B cell (primary cell): ENCODE measurements at regions of chr22 and their contacts with region 1.

Region 1: DNA sequence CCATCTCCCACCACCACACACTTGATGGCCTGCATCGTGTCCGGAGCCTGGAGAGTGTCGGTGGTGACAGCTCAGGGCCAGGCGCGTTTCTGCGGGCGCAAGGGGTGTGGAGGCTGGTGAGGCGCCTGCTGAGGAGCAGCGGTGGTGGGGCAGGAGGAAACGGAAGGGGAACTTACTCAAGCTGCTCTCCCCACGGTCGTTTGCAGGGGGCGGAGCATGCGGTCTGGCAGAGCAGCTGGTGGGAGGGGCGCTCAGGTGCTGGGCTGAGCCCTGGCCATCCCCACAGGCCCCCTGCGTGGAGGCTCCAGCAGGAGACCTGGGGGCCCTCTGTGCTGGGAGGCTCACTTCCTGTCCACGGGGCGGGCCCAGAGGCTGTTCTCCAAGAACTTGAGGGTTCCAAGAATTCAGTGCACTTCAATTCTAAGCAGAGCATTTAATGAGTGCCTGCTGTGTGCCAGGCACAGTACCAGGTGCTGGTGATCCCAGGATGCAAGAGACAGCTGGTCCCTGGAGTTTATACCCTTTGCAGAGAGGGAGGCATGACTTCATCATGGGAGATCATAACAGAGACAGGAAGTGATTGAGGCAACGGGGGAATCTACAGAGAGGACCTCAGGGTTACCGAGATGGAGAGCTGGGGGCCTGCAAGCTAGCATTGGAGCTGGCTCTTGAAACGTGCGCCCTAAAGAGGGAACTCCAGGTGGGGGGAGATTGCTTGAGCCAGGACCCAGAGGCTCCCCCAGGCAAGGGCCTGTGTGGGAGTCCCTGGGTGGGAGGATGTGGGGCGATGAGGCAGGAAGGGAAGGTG is at the start of gene RAC2:
- DNase-seq: peak; percentile 94
- ATAC-seq: peak; percentile 65
- H3K4me3 ChIP-seq: peak within 1 kb of the TSS; percentile 88 to 99 (median 97)
- H3K4me3 Mint-ChIP-seq: peak within 1 kb of the TSS; percentile 97
- H3K27ac ChIP-seq: peak within 1 kb of the TSS; percentile 80 to 86
- H3K27ac Mint-ChIP-seq: peak within 1 kb of the TSS; percentile 89
- H3K4me1 ChIP-seq: peaks cover 50 to 68% of the 10 kb centered on the region in 2 donors
- H3K4me1 Mint-ChIP-seq: peaks cover 77% of the 10 kb centered on the region
- H3K27me3 ChIP-seq: no peaks in the 10 kb centered on the region
- H3K27me3 Mint-ChIP-seq: no peaks in the 10 kb centered on the region
- CTCF ChIP-seq: no peak
- total RNA-seq, gene RAC2: 249 and 273 TPM in 2 replicates

Region 2: GRCh38 chr22:37121887-37122591 is 122.3 kb before region 1 on chr22:
- CTCF ChIA-PET with region 1: no interaction called
- POLR2A ChIA-PET with region 1: no interaction called
- intact Hi-C with region 1: loop called (anchors 1 kb)
- DNase-seq: peak; percentile 88
- ATAC-seq: peak; percentile 92
- H3K4me3 ChIP-seq: peak overlapping the region in 1 of 5 experiments; percentile 33
- H3K4me3 Mint-ChIP-seq: peak overlapping the region; percentile 86
- H3K27ac ChIP-seq: peak overlapping the region; percentile 39 to 69
- H3K27ac Mint-ChIP-seq: peak overlapping the region; percentile 98
- H3K4me1 ChIP-seq: peaks cover 14 to 24% of the 10 kb centered on the region in 2 donors
- H3K4me1 Mint-ChIP-seq: peaks cover 29% of the 10 kb centered on the region
- H3K27me3 ChIP-seq: no peaks in the 10 kb centered on the region
- H3K27me3 Mint-ChIP-seq: no peaks in the 10 kb centered on the region
- CTCF ChIP-seq: peak; percentile 19

Region 3: DNA sequence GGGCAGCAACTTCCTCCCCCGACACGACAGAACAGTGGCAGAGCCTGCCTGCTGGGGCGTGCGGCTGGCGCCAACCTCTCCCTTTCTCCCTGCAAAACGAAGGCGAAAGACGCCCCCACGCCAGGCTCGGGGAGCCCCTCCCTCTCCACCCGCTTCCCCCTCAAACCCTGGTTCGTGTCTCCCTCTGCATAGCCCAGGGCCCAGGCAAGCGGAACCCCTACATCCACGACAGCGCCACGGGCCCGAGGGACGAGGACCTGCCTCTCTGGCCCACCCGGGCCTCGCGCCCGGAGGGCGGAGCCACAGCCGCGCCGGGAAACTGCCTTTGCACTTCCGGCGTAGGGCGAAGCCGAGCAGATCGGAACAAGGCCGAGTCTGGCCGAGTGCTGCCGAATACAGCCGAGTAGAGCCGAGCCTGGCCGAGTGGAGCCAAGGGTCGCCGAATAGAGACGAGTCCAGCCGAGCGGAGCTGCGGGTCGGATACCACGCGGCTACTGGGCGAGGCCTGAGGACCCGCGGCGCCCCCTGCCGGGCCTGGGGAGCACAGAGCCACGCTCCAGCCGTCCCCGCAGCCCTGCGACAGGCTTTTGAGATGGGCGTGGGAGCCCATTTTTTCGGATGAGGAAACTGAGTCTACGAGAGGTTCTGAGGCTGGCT is 45.1 kb before region 1 on chr22:
- CTCF ChIA-PET with region 1: interaction called, 108 read pairs
- POLR2A ChIA-PET with region 1: interaction called, 45 read pairs
- intact Hi-C with region 1: loop called (anchors 1 kb)
- DNase-seq: peak; percentile 99
- ATAC-seq: peak; percentile 96
- H3K4me3 ChIP-seq: peak overlapping the region; percentile 59 to 89 (median 80)
- H3K4me3 Mint-ChIP-seq: peak overlapping the region; percentile 93
- H3K27ac ChIP-seq: peak overlapping the region; percentile 85 to 90
- H3K27ac Mint-ChIP-seq: peak overlapping the region; percentile 97
- H3K4me1 ChIP-seq: peaks cover 21 to 28% of the 10 kb centered on the region in 2 donors
- H3K4me1 Mint-ChIP-seq: peaks cover 26% of the 10 kb centered on the region
- H3K27me3 ChIP-seq: no peaks in the 10 kb centered on the region
- H3K27me3 Mint-ChIP-seq: no peaks in the 10 kb centered on the region
- CTCF ChIP-seq: peak; percentile 97

Region 4: GRCh38 chr22:37223965-37224551 is 20.3 kb before region 1 on chr22:
- CTCF ChIA-PET with region 1: interaction called, 129 read pairs
- POLR2A ChIA-PET with region 1: interaction called, 83 read pairs
- intact Hi-C with region 1: loop called (anchors 1 kb)
- DNase-seq: peak; percentile 79
- ATAC-seq: peak; percentile 61
- H3K4me3 ChIP-seq: peak overlapping the region in 2 of 5 experiments; percentile 5 to 8
- H3K4me3 Mint-ChIP-seq: peak overlapping the region; percentile 71
- H3K27ac ChIP-seq: peak overlapping the region; percentile 87 to 93
- H3K27ac Mint-ChIP-seq: peak overlapping the region; percentile 98
- H3K4me1 ChIP-seq: peaks cover 91 to 96% of the 10 kb centered on the region in 2 donors
- H3K4me1 Mint-ChIP-seq: peaks cover 86% of the 10 kb centered on the region
- H3K27me3 ChIP-seq: no peaks in the 10 kb centered on the region
- H3K27me3 Mint-ChIP-seq: no peaks in the 10 kb centered on the region
- CTCF ChIP-seq: no peak

Region 5: GRCh38 chr22:37260901-37261336 is 16.6 kb after region 1 on chr22:
- CTCF ChIA-PET with region 1: interaction called, 377 read pairs
- POLR2A ChIA-PET with region 1: interaction called, 17 read pairs
- intact Hi-C with region 1: loop called (anchors 1 kb)
- DNase-seq: peak; percentile 82
- ATAC-seq: peak; percentile 85
- H3K4me3 ChIP-seq: no peak overlapping the region
- H3K4me3 Mint-ChIP-seq: peak overlapping the region; percentile 27
- H3K27ac ChIP-seq: no peak overlapping the region
- H3K27ac Mint-ChIP-seq: peak overlapping the region; percentile 12
- H3K4me1 ChIP-seq: peaks cover 27 to 36% of the 10 kb centered on the region in 2 donors
- H3K4me1 Mint-ChIP-seq: peaks cover 31% of the 10 kb centered on the region
- H3K27me3 ChIP-seq: no peaks in the 10 kb centered on the region
- H3K27me3 Mint-ChIP-seq: no peaks in the 10 kb centered on the region
- CTCF ChIP-seq: peak; percentile 95

Region 6: GRCh38 chr22:37282385-37282677 is 38.0 kb after region 1 on chr22 and contains the start of gene CYTH4:
- CTCF ChIA-PET with region 1: interaction called, 4 read pairs
- POLR2A ChIA-PET with region 1: interaction called, 16 read pairs
- intact Hi-C with region 1: loop called (anchors 2 kb)
- DNase-seq: peak; percentile 82
- ATAC-seq: peak; percentile 58
- H3K4me3 ChIP-seq: peak within 1 kb of the TSS; percentile 82 to 100 (median 99)
- H3K4me3 Mint-ChIP-seq: peak within 1 kb of the TSS; percentile 89
- H3K27ac ChIP-seq: peak within 1 kb of the TSS; percentile 79 to 83
- H3K27ac Mint-ChIP-seq: peak within 1 kb of the TSS; percentile 97
- H3K4me1 ChIP-seq: peaks cover 36 to 73% of the 10 kb centered on the region in 2 donors
- H3K4me1 Mint-ChIP-seq: peaks cover 81% of the 10 kb centered on the region
- H3K27me3 ChIP-seq: no peaks in the 10 kb centered on the region
- H3K27me3 Mint-ChIP-seq: no peaks in the 10 kb centered on the region
- CTCF ChIP-seq: no peak
- total RNA-seq, gene CYTH4: 92.2 and 98.0 TPM in 2 replicates